ENCODE measurements at regions of chr4 and their contacts with region 1.

Region 1: GRCh38 chr4:42568610-42569207 is 88.2 kb downstream of the ATP8A1 start:
- DNase-seq: peak in 9 of 10 donors; percentile 45 to 86 (median 65)
- H3K4me3 ChIP-seq: no peak overlapping the region
- H3K27ac ChIP-seq: peak overlapping the region in 52 of 59 donors; percentile 5 to 96 (median 86)
- H3K27me3 ChIP-seq: no peaks in the 10 kb centered on the region
- CTCF ChIP-seq: peak; percentile 70 to 93 (median 85)

Region 2: DNA sequence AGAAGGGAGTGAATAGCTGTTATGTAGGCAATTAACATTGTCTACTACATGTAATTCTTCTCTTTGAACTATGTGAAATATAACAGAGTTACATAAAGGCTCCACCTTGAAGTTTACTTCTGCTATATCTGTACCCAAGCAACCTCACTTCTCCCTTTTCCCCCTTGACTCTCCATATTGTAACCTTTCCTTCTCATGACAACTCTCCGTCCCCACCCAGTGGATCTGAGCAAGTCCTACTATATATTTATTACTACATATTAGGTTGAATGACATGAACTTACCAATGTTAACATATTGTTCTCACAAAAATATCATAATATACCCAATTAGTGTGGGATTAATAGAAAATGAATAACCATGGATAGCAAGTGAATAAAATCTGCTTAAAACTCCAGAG is 181.4 kb after region 1 on chr4:
- intact Hi-C with region 1: loop called in 1 of 2 experiments (anchors 5 kb)
- DNase-seq: peak in 1 of 10 donors; percentile 10
- H3K4me3 ChIP-seq: no peak overlapping the region
- H3K27ac ChIP-seq: peak overlapping the region in 6 of 59 donors; percentile 2 to 39 (median 14)
- H3K27me3 ChIP-seq: no peaks in the 10 kb centered on the region
- CTCF ChIP-seq: peak in 48 of 56 donors; percentile 14 to 70 (median 40)

Region 3: GRCh38 chr4:42816189-42816879 is 247.6 kb after region 1 on chr4:
- intact Hi-C with region 1: loop called in 1 of 2 experiments (anchors 10 kb)
- DNase-seq: no peak
- H3K4me3 ChIP-seq: no peak overlapping the region
- H3K27ac ChIP-seq: peak overlapping the region in 1 of 59 donors; percentile 5
- H3K27me3 ChIP-seq: peaks cover 0 to 5% (median 0%) of the 10 kb centered on the region in 45 donors
- CTCF ChIP-seq: no peak

Region 4: DNA sequence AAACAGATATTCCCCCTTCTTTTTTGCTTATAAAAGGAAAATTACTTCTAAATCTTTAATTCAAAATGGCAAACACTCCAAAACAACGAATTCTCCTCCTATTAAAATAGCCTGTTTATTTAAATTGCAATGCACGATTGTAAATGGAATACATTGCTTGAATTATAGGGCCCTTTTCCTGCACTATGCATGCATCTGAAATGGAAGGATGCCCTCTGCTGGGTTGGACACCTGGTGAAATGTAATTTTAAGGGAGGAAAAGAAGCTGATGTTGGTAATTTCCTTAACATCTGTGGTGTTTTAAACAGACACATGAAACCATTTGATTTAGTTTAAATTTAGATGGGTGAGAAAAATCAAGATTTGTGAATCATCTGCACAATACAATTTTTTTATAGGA is 396.6 kb after region 1 on chr4:
- intact Hi-C with region 1: loop called in 1 of 2 experiments (anchors 10 kb)
- DNase-seq: peak in 3 of 10 donors; percentile 13 to 60 (median 31)
- H3K4me3 ChIP-seq: no peak overlapping the region
- H3K27ac ChIP-seq: peak overlapping the region in 5 of 59 donors; percentile 8 to 75 (median 24)
- H3K27me3 ChIP-seq: no peaks in the 10 kb centered on the region
- CTCF ChIP-seq: peak in 48 of 56 donors; percentile 17 to 60 (median 38)